Endothelial cell of umbilical vein (primary cell): ENCODE measurements at regions of chr3 and their contacts with region 1.

Region 1: DNA sequence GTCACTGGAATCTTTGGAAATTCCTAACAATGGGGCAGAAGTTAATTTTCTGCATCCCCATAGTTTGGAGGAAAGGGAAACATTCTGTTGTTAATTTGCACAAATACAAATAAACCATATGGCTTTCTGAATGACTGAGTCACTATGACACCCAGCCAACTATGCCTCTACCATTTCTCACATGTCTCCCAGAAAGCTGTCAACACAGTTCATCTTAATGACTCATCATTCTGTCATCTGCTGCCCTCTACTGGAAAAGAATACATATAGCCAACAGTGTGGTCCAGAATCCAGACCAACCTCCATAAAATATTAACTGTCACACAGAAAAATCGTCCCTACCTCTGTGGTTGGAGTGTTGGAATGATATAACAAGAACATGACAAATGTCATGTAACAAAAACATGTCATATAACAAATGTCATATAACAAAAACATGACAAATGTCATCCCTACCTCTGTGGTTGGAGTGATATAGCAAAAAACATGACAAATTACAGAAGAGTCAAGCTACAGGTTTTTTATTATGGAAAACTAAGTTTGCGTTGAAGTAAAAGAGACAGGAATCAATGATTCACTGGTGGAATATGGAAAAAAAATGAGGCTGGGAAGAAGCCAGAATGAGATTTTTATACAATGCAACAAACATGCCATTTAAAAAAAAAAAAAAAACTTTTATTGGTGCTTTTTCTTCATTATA is 47.7 kb upstream of the GYG1 start:
- DNase-seq: peak; percentile 89
- H3K4me3 ChIP-seq: no peak overlapping the region
- H3K27ac ChIP-seq: no peak overlapping the region
- H3K4me1 ChIP-seq: no peaks in the 10 kb centered on the region
- H3K27me3 ChIP-seq: peaks cover 3 to 14% of the 10 kb centered on the region in 2 experiments
- CTCF ChIP-seq: peak; percentile 52 to 60
- POLR2A ChIP-seq: no peak

Region 2: GRCh38 chr3:148309390-148310035 is 634.1 kb before region 1 on chr3:
- CTCF ChIA-PET with region 1: interaction called, 4 read pairs
- POLR2A ChIA-PET with region 1: no interaction called
- dilution Hi-C with region 1: no loop called
- intact Hi-C with region 1: loop called (anchors 1 kb)
- DNase-seq: peak; percentile 36
- H3K4me3 ChIP-seq: no peak overlapping the region
- H3K27ac ChIP-seq: no peak overlapping the region
- H3K4me1 ChIP-seq: no peaks in the 10 kb centered on the region
- H3K27me3 ChIP-seq: no peaks in the 10 kb centered on the region
- CTCF ChIP-seq: peak; percentile 48 to 72
- POLR2A ChIP-seq: no peak

Region 3: GRCh38 chr3:148379763-148380382 is 563.8 kb before region 1 on chr3:
- CTCF ChIA-PET with region 1: interaction called, 55 read pairs
- POLR2A ChIA-PET with region 1: no interaction called
- dilution Hi-C with region 1: no loop called
- intact Hi-C with region 1: loop called (anchors 1 kb)
- DNase-seq: peak; percentile 58
- H3K4me3 ChIP-seq: no peak overlapping the region
- H3K27ac ChIP-seq: no peak overlapping the region
- H3K4me1 ChIP-seq: no peaks in the 10 kb centered on the region
- H3K27me3 ChIP-seq: no peaks in the 10 kb centered on the region
- CTCF ChIP-seq: peak; percentile 26 to 34
- POLR2A ChIP-seq: no peak

Region 4: GRCh38 chr3:148513167-148513566 is 430.5 kb before region 1 on chr3:
- CTCF ChIA-PET with region 1: no interaction called
- POLR2A ChIA-PET with region 1: no interaction called
- dilution Hi-C with region 1: no loop called
- intact Hi-C with region 1: loop called (anchors 10 kb)
- DNase-seq: peak; percentile 75
- H3K4me3 ChIP-seq: no peak overlapping the region
- H3K27ac ChIP-seq: peak overlapping the region; percentile 79
- H3K4me1 ChIP-seq: peaks cover 14% of the 10 kb centered on the region
- H3K27me3 ChIP-seq: no peaks in the 10 kb centered on the region
- CTCF ChIP-seq: no peak
- POLR2A ChIP-seq: no peak

Region 5: DNA sequence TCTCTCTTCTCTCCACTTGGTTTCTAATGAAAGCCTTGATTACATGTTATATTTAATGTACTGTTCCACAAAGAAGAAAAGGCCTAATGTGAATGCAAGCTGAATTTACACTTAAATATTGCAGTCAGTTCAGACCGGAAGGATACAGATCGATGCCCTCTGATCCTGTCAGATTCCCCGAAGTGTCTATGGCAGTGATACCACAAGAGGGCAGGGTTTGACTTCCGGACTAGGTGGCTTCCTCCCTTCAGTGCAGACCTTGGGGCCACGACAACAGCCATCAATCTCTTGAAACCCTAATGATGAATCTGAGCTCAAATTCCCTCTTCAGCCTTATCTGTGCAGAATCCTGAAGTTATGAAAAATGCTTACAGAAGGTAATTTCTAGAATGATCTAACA is 216.4 kb before region 1 on chr3:
- CTCF ChIA-PET with region 1: interaction called, 3 read pairs
- POLR2A ChIA-PET with region 1: no interaction called
- dilution Hi-C with region 1: no loop called
- intact Hi-C with region 1: loop called (anchors 1 kb)
- DNase-seq: no peak
- H3K4me3 ChIP-seq: no peak overlapping the region
- H3K27ac ChIP-seq: no peak overlapping the region
- H3K4me1 ChIP-seq: no peaks in the 10 kb centered on the region
- H3K27me3 ChIP-seq: peaks cover 0 to 14% of the 10 kb centered on the region in 2 experiments
- CTCF ChIP-seq: peak in 1 of 2 donors; percentile 7
- POLR2A ChIP-seq: no peak

Region 6: GRCh38 chr3:148861277-148861869 is 82.3 kb before region 1 on chr3:
- CTCF ChIA-PET with region 1: interaction called, 181 read pairs
- POLR2A ChIA-PET with region 1: no interaction called
- dilution Hi-C with region 1: no loop called
- intact Hi-C with region 1: loop called (anchors 1 kb)
- DNase-seq: peak; percentile 60
- H3K4me3 ChIP-seq: no peak overlapping the region
- H3K27ac ChIP-seq: no peak overlapping the region
- H3K4me1 ChIP-seq: no peaks in the 10 kb centered on the region
- H3K27me3 ChIP-seq: peaks cover 18 to 28% of the 10 kb centered on the region in 2 experiments
- CTCF ChIP-seq: peak; percentile 30 to 46
- POLR2A ChIP-seq: no peak

Region 7: DNA sequence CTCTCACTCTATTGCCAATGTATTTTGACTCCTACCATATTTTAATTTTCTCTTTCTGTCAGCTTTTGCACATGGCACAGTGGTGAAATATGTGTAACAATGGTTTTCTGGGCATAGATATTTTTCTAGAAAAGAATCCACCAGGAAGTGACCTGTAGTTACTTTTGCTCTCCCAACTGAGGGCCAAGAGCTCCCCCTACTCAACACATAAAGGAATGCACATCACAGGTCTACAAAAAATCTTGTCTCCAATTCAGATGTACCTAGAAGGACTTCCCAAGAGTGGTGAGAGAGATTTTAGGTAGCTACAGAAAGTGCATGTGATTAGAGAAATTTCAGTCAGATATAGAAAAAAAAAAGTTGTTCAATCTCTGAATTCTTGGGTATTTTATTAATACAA is 63.0 kb before region 1 on chr3:
- CTCF ChIA-PET with region 1: interaction called, 8 read pairs
- POLR2A ChIA-PET with region 1: no interaction called
- dilution Hi-C with region 1: no loop called
- intact Hi-C with region 1: loop called (anchors 1 kb)
- DNase-seq: no peak
- H3K4me3 ChIP-seq: no peak overlapping the region
- H3K27ac ChIP-seq: peak overlapping the region; percentile 35
- H3K4me1 ChIP-seq: peaks cover 36% of the 10 kb centered on the region
- H3K27me3 ChIP-seq: no peaks in the 10 kb centered on the region
- CTCF ChIP-seq: no peak
- POLR2A ChIP-seq: no peak